Adrenal gland (tissue), 19 donors: ENCODE measurements at regions of chr14 and their contacts with region 1.

Region 1: DNA sequence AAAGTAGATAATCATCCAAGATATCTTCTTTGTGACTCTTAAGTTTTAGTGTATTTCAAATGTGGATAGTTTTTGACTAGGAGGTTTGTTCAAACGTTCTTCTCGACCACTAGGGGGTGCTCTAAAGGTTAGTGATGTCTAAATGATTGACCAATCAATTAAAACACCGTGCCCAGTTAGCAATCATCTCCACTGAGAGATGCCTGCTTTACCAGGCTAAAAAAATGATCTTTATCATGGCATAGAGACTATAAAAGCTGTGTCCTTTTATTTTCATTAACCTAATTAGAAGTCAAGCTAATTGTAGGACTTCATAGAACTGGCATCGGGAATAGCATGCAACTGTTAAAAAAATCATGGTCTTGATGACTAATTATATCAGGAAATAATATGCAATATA is 153.9 kb downstream of the PRKCH start:
- DNase-seq: peak in 1 of 7 donors; percentile 29
- H3K4me3 ChIP-seq: no peak overlapping the region
- H3K27ac ChIP-seq: peak overlapping the region in 4 of 5 donors; percentile 36 to 95 (median 52)
- H3K4me1 ChIP-seq: peaks cover 36 to 76% of the 10 kb centered on the region in 2 donors
- H3K27me3 ChIP-seq: no peaks in the 10 kb centered on the region
- CTCF ChIP-seq: peak; percentile 59 to 77 (median 67)
- POLR2A ChIP-seq: no peak

Region 2: GRCh38 chr14:61553725-61554641 is 78.7 kb after region 1 on chr14:
- intact Hi-C with region 1: loop called in 1 of 2 experiments (anchors 10 kb)
- DNase-seq: peak in 6 of 7 donors; percentile 62 to 85 (median 76)
- H3K4me3 ChIP-seq: no peak overlapping the region
- H3K27ac ChIP-seq: peak overlapping the region; percentile 22 to 90 (median 80)
- H3K4me1 ChIP-seq: peaks cover 23 to 27% of the 10 kb centered on the region in 2 donors
- H3K27me3 ChIP-seq: no peaks in the 10 kb centered on the region
- CTCF ChIP-seq: no peak
- POLR2A ChIP-seq: no peak

Region 3: DNA sequence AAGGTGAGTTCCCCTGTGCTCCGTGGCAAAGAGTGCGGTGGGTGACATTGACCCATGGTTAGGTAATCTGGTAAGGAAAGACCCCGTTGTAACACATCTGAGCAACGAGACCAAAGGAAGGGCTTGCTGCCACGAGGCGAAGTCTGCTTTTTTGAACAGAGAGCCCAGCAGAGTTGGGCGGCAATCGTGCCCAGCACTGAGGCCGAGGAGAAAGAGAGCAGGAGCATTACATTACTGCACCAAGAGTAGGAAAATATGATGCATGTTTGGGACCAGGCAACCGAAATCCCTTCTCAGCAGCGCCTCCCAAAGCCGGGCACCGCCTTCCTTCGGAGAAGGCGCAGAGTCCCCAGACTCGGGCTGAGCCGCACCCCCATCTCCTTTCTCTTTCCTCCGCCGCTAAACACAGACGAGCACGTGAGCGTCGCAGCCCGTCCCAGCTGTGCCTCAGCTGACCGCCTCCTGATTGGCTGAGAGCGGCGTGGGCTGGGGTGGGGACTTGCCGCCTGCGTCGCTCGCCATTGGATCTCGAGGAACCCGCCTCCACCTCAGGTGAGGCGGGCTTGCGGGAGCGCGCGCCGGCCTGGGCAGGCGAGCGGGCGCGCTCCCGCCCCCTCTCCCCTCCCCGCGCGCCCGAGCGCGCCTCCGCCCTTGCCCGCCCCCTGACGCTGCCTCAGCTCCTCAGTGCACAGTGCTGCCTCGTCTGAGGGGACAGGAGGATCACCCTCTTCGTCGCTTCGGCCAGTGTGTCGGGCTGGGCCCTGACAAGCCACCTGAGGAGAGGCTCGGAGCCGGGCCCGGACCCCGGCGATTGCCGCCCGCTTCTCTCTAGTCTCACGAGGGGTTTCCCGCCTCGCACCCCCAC is 219.7 kb after region 1 on chr14 and contains the start of gene HIF1A:
- intact Hi-C with region 1: loop called (anchors 10 kb)
- DNase-seq: peak; percentile 97 to 99 (median 98)
- H3K4me3 ChIP-seq: peak within 1 kb of the TSS; percentile 83 to 96 (median 94)
- H3K27ac ChIP-seq: peak within 1 kb of the TSS; percentile 97 to 100 (median 98)
- H3K4me1 ChIP-seq: peaks cover 10 to 32% of the 10 kb centered on the region in 2 donors
- H3K27me3 ChIP-seq: no peaks in the 10 kb centered on the region
- CTCF ChIP-seq: no peak
- POLR2A ChIP-seq: peak; percentile 97 to 98
- total RNA-seq, gene HIF1A: 186 to 531 (median 349) TPM